Gastrocnemius medialis (tissue), 4 donors: ENCODE measurements at regions of chr10 and their contacts with region 1.

Region 1: GRCh38 chr10:14478604-14479003 is 147.9 kb upstream of the FRMD4A start:
- DNase-seq: peak in 1 of 2 donors; percentile 28
- ATAC-seq: peak in 1 of 2 donors; percentile 44
- H3K4me3 ChIP-seq: no peak overlapping the region
- H3K27ac ChIP-seq: no peak overlapping the region
- H3K4me1 ChIP-seq: no peaks in the 10 kb centered on the region
- H3K27me3 ChIP-seq: no peaks in the 10 kb centered on the region
- CTCF ChIP-seq: peak in 3 of 5 experiments; percentile 14 to 41 (median 29)
- POLR2A ChIP-seq: no peak

Region 2: DNA sequence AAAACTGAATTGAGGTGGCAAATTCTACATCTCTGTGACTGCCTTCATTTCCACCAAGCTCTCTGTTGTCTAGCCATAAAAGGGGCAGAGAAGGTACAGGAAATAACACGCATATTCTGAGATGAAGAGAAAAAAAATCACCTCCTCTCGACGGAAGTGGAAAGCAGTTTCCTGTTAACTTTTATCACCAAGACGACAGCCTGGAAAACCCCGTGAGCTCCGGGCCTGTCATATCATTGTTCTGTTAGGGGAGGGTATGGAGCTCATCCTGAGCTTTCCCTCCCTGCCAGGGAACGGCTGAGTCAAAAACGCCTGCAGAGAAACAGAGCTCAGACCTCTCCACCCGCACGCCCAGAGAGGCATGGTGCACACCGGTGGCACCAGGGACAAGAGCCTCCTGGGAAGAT is 691.6 kb before region 1 on chr10:
- in situ Hi-C with region 1: no loop called
- intact Hi-C with region 1: loop called (anchors 2 kb)
- DNase-seq: no peak
- ATAC-seq: peak in 1 of 2 donors; percentile 15
- H3K4me3 ChIP-seq: no peak overlapping the region
- H3K27ac ChIP-seq: peak overlapping the region; percentile 21 to 76 (median 39)
- H3K4me1 ChIP-seq: peaks cover 8 to 25% of the 10 kb centered on the region in 2 donors
- H3K27me3 ChIP-seq: no peaks in the 10 kb centered on the region
- CTCF ChIP-seq: no peak
- POLR2A ChIP-seq: no peak

Region 3: DNA sequence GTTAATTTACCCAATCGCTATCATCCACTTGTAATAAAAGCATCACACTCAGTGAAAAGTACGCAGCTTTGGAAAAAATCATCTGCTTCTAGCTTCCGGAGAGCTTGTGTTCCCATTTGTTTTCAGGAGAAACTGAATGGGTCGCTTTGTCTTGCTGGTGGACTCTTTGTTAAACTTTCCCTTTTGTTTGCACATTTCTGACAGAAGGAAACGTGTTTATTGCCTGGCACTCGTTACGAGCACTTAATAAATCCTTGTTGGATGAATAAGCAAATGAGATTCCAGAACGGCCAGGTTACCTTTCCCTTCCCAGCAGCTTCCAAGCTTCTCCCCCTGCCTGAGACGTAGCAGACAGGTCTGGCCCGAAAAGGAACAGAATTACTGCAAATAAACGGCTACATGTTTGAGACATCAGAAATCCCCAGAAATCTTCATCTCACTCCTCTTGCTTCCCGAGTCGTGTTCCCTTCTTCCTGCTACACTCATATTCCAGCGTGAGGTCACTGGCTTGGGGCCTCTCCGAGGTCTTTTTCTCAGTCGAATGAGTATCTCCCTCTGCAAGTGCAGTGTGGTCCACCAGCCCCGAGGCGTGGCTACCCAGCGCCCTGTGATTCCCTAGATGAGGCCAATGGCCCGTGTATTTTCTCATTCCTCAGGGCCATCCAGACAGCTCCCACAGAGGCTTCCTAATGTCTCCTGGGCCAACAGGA is 315.1 kb before region 1 on chr10:
- in situ Hi-C with region 1: no loop called
- intact Hi-C with region 1: no loop called
- DNase-seq: no peak
- ATAC-seq: no peak
- H3K4me3 ChIP-seq: no peak overlapping the region
- H3K27ac ChIP-seq: no peak overlapping the region
- H3K4me1 ChIP-seq: no peaks in the 10 kb centered on the region
- H3K27me3 ChIP-seq: peaks cover 0 to 8% (median 0%) of the 10 kb centered on the region in 3 donors
- CTCF ChIP-seq: no peak
- POLR2A ChIP-seq: no peak

Region 4: GRCh38 chr10:14185316-14186045 is 293.1 kb before region 1 on chr10:
- in situ Hi-C with region 1: loop called in 1 of 4 experiments (anchors 25 kb)
- intact Hi-C with region 1: no loop called
- DNase-seq: no peak
- ATAC-seq: no peak
- H3K4me3 ChIP-seq: no peak overlapping the region
- H3K27ac ChIP-seq: no peak overlapping the region
- H3K4me1 ChIP-seq: no peaks in the 10 kb centered on the region
- H3K27me3 ChIP-seq: no peaks in the 10 kb centered on the region
- CTCF ChIP-seq: no peak
- POLR2A ChIP-seq: no peak

Region 5: DNA sequence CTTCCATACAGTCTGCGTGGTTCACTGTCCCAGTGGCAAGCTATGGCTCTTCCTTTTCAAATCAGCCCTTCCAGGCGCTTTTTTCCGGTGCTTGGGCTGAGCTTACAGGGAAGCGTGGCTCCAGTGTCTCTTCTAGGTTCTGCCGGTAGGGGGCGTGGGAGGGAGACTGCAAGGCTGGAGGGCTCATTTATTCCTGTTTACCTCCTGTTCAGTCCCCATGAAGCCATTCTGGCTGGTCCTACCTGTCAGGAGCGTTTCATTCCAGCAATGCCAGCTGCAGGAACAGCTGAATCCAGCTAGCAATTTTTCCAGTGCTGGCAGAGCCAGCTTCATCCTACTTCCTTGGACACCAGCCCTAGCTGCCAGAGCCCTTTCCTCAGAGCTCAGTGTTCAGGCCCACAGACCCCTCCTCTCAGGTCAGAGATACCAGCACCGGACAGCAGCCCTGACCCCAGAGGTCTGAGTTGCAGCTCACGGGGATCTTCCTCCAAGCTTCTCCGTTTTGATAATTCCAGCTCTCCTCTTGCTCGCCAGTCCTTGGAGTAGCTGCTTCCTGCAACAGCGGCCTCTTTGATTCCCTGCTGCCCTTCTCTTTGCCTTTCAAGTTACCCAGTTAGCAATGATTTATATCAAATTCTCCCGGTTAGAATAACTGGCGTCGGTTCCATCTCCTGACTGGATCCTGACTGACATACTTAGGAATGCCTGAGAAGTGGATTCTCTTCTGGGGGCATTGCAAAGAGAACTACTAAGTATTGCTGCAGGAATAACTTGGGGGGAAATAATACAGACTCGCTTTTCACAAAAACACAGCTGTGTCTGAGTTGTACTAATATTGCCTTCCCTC is 277.7 kb before region 1 on chr10:
- in situ Hi-C with region 1: loop called in 2 of 4 experiments (anchors 10 to 25 kb)
- intact Hi-C with region 1: loop called (anchors 2 kb)
- DNase-seq: peak in 1 of 2 donors; percentile 18
- ATAC-seq: no peak
- H3K4me3 ChIP-seq: no peak overlapping the region
- H3K27ac ChIP-seq: no peak overlapping the region
- H3K4me1 ChIP-seq: no peaks in the 10 kb centered on the region
- H3K27me3 ChIP-seq: peaks cover 0 to 2% (median 0%) of the 10 kb centered on the region in 3 donors
- CTCF ChIP-seq: no peak
- POLR2A ChIP-seq: no peak